Astrocyte of the cerebellum (primary cell): ENCODE measurements at regions of chr14 and their contacts with region 1.

Region 1: DNA sequence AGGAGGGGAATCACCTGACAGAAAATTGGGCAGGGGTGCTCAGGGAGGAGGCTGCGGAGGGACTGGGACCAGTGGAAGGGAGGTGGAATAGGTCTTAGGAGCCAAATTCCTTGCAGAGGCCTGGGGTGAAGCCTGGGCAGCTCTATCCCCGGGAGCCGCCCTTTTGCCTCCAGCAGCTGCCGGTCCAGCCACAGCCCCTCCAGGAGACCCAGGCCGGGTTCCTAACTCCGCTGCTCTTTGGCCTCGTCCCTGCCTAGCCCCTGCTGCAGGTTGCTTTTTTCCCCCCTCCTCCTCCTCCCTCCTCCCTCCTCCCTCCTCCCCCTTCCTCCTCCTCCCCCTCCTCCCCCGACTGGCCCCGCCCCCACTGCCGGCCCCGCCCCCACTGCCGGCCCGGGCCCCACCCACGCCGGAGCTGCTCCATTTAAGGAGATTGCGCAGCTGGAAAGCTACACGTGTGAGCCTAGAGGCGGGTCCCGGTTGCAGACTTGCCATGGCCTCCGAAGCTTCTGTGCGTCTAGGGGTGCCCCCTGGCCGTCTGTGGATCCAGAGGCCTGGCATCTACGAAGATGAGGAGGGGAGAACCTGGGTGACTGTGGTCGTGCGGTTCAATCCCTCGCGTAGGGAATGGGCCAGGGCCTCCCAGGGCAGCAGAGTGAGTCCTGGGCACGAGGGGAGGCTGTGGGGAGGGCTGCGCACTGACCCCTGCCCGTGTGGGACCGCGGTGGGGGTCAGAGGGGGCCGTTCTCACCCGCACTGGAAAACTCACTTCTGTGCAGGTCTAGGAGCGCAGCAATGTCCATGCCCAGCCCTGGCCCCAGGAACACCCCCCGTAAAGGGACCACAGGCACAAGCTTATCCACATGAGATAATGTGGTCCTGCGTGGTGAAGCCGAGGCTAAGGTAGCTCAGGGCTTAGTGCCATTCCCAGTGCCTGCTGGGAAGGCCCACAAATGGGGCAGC is at the start of gene TCL1B:
- DNase-seq: no peak
- H3K4me3 ChIP-seq: no peak within 1 kb of the TSS
- CTCF ChIP-seq: no peak

Region 2: GRCh38 chr14:95635060-95635459 is 51.2 kb before region 1 on chr14:
- in situ Hi-C with region 1: loop called (anchors 5 kb)
- DNase-seq: no peak
- H3K4me3 ChIP-seq: no peak overlapping the region
- CTCF ChIP-seq: no peak

Region 3: DNA sequence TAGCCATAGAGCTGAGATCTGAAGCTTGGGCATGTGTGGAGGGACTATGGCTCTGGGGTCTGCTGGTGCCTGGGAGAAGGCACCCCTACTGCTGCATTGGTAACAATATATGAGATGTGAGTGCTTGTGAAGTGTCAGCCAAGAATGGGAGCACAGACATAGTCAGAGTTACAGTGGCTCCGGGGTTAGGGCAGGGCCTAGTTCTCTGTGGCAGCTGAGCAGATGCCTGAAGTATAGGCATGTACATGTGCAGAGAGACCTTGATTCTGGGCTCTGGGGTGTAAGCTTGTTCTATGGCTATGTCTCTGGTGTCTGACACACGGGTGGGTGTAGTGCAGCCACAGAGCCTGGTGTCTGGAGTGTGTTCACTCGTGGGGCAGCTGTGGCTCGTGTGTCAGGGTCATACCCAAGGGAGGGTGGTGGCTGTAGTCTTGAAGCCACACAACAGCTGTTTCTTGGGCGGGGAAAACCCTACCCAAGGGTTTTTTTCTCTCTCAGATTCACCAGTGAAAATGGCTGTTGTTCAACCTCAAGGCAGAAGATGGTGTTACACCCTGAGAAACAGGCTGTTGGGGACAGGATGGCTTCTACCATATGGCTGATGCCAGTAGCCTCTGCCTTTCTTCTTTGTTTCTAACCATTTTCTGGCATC is 39.6 kb after region 1 on chr14:
- in situ Hi-C with region 1: no loop called
- DNase-seq: no peak
- H3K4me3 ChIP-seq: no peak overlapping the region
- CTCF ChIP-seq: no peak